Cardiac septum (tissue), 1 donor: ENCODE measurements at regions of chr12 and their contacts with region 1.

Region 1: GRCh38 chr12:92608151-92609091 is 94.4 kb upstream of the PLEKHG7 start:
- DNase-seq: no peak

Region 2: GRCh38 chr12:91577586-91578539 is 1030.6 kb before region 1 on chr12:
- intact Hi-C with region 1: loop called (anchors 5 kb)
- DNase-seq: no peak